ENCODE measurements at regions of chr1 and their contacts with region 1.

Region 1: DNA sequence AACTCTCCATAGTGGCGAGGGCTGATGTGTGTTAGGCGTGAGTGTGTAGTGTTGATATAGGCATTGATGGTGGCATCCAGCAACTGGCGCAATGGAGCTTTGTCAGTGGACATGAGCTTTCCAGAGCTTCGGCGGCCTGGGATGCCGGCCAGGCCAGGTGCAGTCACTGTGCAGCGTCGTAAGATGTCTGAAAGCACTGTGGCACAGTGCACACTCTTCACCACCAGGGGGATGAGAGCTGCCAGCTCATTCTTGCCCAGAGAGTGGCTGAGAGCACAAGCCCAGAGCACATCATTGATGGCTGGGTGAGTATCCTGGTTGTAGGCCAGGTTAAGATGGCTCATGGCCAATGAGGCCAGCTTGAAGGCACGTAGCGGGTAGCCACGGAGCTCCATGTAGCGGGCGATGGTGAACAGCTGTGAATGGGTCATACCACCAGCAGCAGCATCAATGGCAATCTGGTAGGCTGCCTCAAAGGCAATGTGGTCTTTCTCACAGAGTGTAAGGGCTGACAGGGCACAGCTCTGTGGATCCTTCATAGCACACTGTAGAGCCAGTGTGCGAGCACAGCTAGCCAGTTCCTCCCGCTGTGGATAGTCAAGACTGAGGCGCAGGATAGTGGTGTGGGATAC is 6.7 kb downstream of the UROD start:
- DNase-seq: peak; percentile 89 to 91
- H3K4me3 ChIP-seq: no peak overlapping the region
- H3K27ac ChIP-seq: no peak overlapping the region
- H3K4me1 ChIP-seq: peaks cover 3 to 9% of the 10 kb centered on the region in 2 donors
- H3K27me3 ChIP-seq: no peaks in the 10 kb centered on the region
- CTCF ChIP-seq: peak; percentile 68 to 95 (median 88)
- POLR2A ChIP-seq: no peak

Region 2: DNA sequence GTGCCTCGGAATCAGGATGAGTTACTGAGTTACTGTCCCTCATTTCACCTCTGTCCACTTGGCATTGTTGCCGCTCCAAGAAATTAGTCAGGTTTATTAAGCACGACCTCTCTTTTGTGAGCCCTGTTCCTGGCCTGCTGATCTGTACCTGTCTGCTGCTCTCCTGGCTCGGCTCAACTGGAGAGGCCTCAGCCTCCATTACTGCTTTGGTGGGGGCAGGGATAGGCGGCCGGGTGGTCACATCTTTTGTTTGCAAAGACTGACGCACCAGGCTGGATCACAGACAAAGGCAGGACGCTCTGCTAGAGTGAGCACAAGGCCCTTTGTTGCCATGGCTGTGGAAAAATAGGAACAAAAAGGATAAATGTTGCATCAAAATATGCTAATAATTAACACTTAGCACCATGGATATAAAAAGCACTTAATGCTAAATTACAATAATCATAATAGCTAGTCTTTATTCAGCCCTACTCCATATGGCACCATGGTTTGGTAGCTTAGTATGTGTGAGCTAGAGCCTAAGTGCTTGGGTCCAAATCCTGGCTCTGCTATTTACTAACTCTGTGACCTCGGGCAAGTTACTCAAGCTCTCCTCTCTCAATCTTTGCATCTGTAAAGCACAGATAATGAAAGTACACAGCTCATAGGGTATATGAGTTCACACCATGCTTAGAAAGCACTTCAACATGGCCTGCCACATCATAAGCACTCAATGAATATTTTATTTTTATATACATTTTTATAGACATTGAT is 279.1 kb after region 1 on chr1:
- intact Hi-C with region 1: loop called (anchors 2 kb)
- DNase-seq: no peak
- H3K4me3 ChIP-seq: no peak overlapping the region
- H3K27ac ChIP-seq: no peak overlapping the region
- H3K4me1 ChIP-seq: peaks cover 0 to 6% of the 10 kb centered on the region in 2 donors
- H3K27me3 ChIP-seq: no peaks in the 10 kb centered on the region
- CTCF ChIP-seq: no peak
- POLR2A ChIP-seq: no peak